Endothelial cell of umbilical vein (primary cell): ENCODE measurements at regions of chr3 and their contacts with region 1.

Region 1: DNA sequence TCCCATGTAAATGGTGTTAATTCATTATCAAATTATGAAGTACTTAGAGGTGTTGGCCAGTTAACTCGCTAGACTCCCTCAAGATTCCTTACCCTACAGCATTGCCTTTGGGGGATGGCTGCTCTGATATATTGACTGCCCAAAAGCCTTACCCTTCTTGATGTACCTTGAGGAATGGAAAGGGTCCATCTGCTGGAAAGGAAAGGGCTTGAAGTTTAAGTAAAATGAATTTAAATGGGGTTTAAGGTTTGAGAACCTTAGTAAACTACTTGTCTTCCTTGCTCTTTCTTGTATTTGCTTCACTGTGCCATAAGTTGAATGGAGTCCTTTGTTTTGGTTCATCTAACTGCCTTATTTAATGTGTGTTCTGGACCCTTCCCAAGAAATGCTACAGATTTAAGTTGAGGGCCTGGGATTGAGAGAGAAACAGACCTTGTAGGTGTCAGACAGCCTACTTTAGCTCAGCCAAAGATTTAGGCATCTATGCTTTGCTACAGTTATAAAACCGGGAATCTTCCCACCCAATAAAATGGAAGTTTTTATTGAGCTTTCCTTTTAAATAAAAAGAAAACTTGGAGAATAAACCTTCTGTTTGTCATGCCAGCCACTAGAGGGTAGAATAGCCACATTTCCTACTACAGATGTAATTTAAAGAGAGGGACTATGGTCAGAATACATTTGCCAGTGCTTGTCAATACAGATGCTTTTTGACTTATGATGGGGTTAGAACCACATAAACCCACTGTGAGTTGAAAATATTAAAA is 25.3 kb downstream of the CMSS1 start:
- DNase-seq: peak; percentile 74
- H3K4me3 ChIP-seq: no peak overlapping the region
- H3K27ac ChIP-seq: no peak overlapping the region
- H3K4me1 ChIP-seq: peaks cover 14% of the 10 kb centered on the region
- H3K27me3 ChIP-seq: no peaks in the 10 kb centered on the region
- CTCF ChIP-seq: peak; percentile 40 to 53
- POLR2A ChIP-seq: no peak

Region 2: GRCh38 chr3:99579246-99579645 is 263.8 kb before region 1 on chr3:
- CTCF ChIA-PET with region 1: no interaction called
- POLR2A ChIA-PET with region 1: no interaction called
- dilution Hi-C with region 1: no loop called
- intact Hi-C with region 1: no loop called
- DNase-seq: peak; percentile 32
- H3K4me3 ChIP-seq: no peak overlapping the region
- H3K27ac ChIP-seq: peak overlapping the region; percentile 52
- H3K4me1 ChIP-seq: peaks cover 28% of the 10 kb centered on the region
- H3K27me3 ChIP-seq: no peaks in the 10 kb centered on the region
- CTCF ChIP-seq: no peak
- POLR2A ChIP-seq: no peak

Region 3: DNA sequence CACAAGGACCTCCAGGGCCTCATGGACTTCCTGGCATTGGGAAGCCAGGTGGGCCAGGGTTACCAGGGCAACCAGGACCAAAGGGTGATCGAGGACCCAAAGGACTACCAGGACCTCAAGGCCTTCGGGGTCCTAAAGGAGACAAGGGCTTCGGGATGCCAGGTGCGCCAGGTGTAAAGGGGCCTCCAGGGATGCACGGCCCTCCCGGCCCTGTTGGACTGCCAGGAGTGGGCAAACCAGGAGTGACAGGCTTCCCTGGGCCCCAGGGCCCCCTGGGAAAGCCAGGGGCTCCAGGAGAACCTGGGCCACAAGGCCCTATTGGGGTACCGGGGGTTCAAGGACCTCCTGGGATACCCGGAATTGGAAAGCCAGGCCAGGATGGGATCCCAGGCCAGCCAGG is 48.5 kb before region 1 on chr3:
- CTCF ChIA-PET with region 1: no interaction called
- POLR2A ChIA-PET with region 1: no interaction called
- dilution Hi-C with region 1: no loop called
- intact Hi-C with region 1: no loop called
- DNase-seq: no peak
- H3K4me3 ChIP-seq: no peak overlapping the region
- H3K27ac ChIP-seq: no peak overlapping the region
- H3K4me1 ChIP-seq: no peaks in the 10 kb centered on the region
- H3K27me3 ChIP-seq: no peaks in the 10 kb centered on the region
- CTCF ChIP-seq: no peak
- POLR2A ChIP-seq: no peak

Region 4: GRCh38 chr3:99895703-99896441 is 52.9 kb after region 1 on chr3:
- CTCF ChIA-PET with region 1: interaction called, 16 read pairs
- POLR2A ChIA-PET with region 1: no interaction called
- dilution Hi-C with region 1: no loop called
- intact Hi-C with region 1: no loop called
- DNase-seq: peak; percentile 85
- H3K4me3 ChIP-seq: peak overlapping the region in 1 of 3 experiments; percentile 9
- H3K27ac ChIP-seq: peak overlapping the region; percentile 92
- H3K4me1 ChIP-seq: peaks cover 22% of the 10 kb centered on the region
- H3K27me3 ChIP-seq: no peaks in the 10 kb centered on the region
- CTCF ChIP-seq: no peak
- POLR2A ChIP-seq: no peak

Region 5: DNA sequence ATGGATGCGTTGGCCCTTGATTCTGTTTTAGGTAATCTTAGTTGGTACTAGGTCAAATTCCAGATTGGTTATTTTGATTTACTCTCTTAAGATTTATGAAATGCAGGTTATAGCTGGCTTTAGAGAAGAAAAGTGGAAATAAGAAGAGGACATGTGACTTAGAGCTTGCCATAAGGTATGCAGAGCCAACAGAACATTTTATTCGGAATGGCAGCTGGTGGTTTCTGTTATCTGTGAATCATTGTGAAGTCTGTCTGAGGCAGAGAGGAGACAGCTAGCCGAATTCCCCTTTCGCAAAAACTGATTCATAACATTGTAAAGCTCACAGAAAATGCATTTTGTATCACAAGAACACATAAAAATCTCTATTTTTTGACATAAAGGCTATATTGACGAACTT is 189.2 kb after region 1 on chr3:
- CTCF ChIA-PET with region 1: interaction called, 12 read pairs
- POLR2A ChIA-PET with region 1: no interaction called
- dilution Hi-C with region 1: no loop called
- intact Hi-C with region 1: no loop called
- DNase-seq: no peak
- H3K4me3 ChIP-seq: no peak overlapping the region
- H3K27ac ChIP-seq: no peak overlapping the region
- H3K4me1 ChIP-seq: peaks cover 3% of the 10 kb centered on the region
- H3K27me3 ChIP-seq: no peaks in the 10 kb centered on the region
- CTCF ChIP-seq: no peak
- POLR2A ChIP-seq: no peak

Region 6: DNA sequence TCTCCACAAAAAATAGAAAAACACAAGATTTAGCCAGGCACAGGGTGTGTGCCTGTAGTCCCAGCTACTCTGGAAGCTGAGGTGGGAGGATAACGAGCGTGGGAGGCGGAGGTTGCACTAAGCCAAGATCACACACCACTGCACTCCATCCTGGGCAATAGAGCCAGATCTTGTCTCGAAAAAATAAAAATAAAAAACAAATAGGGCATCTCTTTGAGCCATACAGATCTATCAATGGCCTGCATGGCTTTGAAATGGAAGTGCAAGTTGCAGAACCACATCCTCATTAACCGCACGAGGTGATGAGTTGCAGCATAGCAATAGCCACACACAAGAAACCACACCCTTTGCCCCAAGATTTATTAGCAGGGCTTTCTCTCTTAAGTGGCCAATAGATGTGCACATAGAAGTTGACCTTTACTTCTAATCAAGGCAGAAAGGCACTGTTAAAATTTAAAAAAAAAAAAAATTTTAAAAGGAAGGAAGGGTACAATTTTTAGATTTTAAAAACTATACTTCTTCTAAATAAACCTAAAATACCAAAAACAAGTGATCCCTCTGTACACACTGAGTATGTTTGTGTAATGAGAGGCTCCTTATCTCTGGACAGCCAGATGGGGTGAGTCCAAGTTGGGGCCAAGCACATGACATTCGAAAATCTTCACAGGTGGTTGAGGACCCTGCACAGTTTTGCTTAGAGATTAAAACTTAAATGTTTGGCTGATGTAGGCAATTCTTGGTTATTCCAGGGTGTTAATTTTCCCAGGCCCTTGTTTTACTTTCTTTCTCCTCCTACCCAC is 217.9 kb after region 1 on chr3:
- CTCF ChIA-PET with region 1: interaction called, 29 read pairs
- POLR2A ChIA-PET with region 1: no interaction called
- dilution Hi-C with region 1: no loop called
- intact Hi-C with region 1: no loop called
- DNase-seq: no peak
- H3K4me3 ChIP-seq: no peak overlapping the region
- H3K27ac ChIP-seq: no peak overlapping the region
- H3K4me1 ChIP-seq: no peaks in the 10 kb centered on the region
- H3K27me3 ChIP-seq: no peaks in the 10 kb centered on the region
- CTCF ChIP-seq: no peak
- POLR2A ChIP-seq: no peak

Region 7: GRCh38 chr3:100105541-100105940 is 262.5 kb after region 1 on chr3:
- CTCF ChIA-PET with region 1: interaction called, 10 read pairs
- POLR2A ChIA-PET with region 1: no interaction called
- dilution Hi-C with region 1: no loop called
- intact Hi-C with region 1: no loop called
- DNase-seq: no peak
- H3K4me3 ChIP-seq: no peak overlapping the region
- H3K27ac ChIP-seq: no peak overlapping the region
- H3K4me1 ChIP-seq: peaks cover 8% of the 10 kb centered on the region
- H3K27me3 ChIP-seq: no peaks in the 10 kb centered on the region
- CTCF ChIP-seq: no peak
- POLR2A ChIP-seq: no peak

Region 8: GRCh38 chr3:100260685-100261484 is 417.9 kb after region 1 on chr3 and contains the start of gene TBC1D23:
- CTCF ChIA-PET with region 1: interaction called, 33 read pairs
- POLR2A ChIA-PET with region 1: interaction called, 4 read pairs
- dilution Hi-C with region 1: no loop called
- intact Hi-C with region 1: no loop called
- DNase-seq: peak; percentile 100
- H3K4me3 ChIP-seq: peak within 1 kb of the TSS; percentile 45 to 87 (median 76)
- H3K27ac ChIP-seq: peak within 1 kb of the TSS; percentile 78
- H3K4me1 ChIP-seq: peaks cover 15% of the 10 kb centered on the region
- H3K27me3 ChIP-seq: no peaks in the 10 kb centered on the region
- CTCF ChIP-seq: peak in 1 of 2 donors; percentile 4
- POLR2A ChIP-seq: peak; percentile 76
- total RNA-seq, gene TBC1D23: 30.0 and 34.8 TPM in 2 replicates